ENCODE measurements at regions of chr10 and their contacts with region 1.

Region 1: GRCh38 chr10:52215745-52216361 is 98.2 kb upstream of the DKK1 start:
- DNase-seq: peak; percentile 41 to 59
- H3K4me3 ChIP-seq: no peak overlapping the region
- H3K27ac ChIP-seq: no peak overlapping the region
- H3K4me1 ChIP-seq: no peaks in the 10 kb centered on the region
- H3K27me3 ChIP-seq: no peaks in the 10 kb centered on the region
- CTCF ChIP-seq: peak; percentile 93

Region 2: DNA sequence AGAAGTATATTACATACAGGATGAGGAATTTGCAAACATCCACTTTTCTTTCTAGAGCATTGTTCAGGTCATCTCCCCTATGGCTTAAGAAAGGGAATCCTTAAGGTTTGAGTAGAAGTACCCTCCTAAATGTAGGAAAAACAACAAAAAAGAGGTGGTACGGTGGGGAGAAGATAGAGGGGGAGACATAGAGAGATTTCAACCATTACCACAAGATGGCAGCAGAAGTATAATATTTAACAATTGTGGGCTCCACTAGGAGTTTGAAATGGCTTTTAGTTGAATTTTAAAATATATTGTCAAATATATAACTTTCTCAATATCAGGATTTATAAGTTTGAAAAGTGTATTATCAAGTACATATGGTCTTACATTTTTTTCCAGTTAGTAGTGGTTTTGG is 1214.3 kb before region 1 on chr10:
- CTCF ChIA-PET with region 1: no interaction called
- POLR2A ChIA-PET with region 1: no interaction called
- intact Hi-C with region 1: loop called (anchors 5 kb)
- DNase-seq: no peak
- H3K4me3 ChIP-seq: no peak overlapping the region
- H3K27ac ChIP-seq: no peak overlapping the region
- H3K4me1 ChIP-seq: no peaks in the 10 kb centered on the region
- H3K27me3 ChIP-seq: no peaks in the 10 kb centered on the region
- CTCF ChIP-seq: peak; percentile 74

Region 3: GRCh38 chr10:51063659-51064535 is 1152.0 kb before region 1 on chr10:
- CTCF ChIA-PET with region 1: interaction called, 3 read pairs
- POLR2A ChIA-PET with region 1: no interaction called
- intact Hi-C with region 1: loop called (anchors 2 kb)
- DNase-seq: no peak
- H3K4me3 ChIP-seq: no peak overlapping the region
- H3K27ac ChIP-seq: no peak overlapping the region
- H3K4me1 ChIP-seq: no peaks in the 10 kb centered on the region
- H3K27me3 ChIP-seq: no peaks in the 10 kb centered on the region
- CTCF ChIP-seq: peak; percentile 79

Measured in PC-9 (cell line).